KBM-7 (cell line): ENCODE measurements at regions of chr1 and their contacts with region 1.

Region 1: GRCh38 chr1:43757343-43758053 is 50.2 kb downstream of the ST3GAL3 start:
- DNase-seq: no peak

Region 2: DNA sequence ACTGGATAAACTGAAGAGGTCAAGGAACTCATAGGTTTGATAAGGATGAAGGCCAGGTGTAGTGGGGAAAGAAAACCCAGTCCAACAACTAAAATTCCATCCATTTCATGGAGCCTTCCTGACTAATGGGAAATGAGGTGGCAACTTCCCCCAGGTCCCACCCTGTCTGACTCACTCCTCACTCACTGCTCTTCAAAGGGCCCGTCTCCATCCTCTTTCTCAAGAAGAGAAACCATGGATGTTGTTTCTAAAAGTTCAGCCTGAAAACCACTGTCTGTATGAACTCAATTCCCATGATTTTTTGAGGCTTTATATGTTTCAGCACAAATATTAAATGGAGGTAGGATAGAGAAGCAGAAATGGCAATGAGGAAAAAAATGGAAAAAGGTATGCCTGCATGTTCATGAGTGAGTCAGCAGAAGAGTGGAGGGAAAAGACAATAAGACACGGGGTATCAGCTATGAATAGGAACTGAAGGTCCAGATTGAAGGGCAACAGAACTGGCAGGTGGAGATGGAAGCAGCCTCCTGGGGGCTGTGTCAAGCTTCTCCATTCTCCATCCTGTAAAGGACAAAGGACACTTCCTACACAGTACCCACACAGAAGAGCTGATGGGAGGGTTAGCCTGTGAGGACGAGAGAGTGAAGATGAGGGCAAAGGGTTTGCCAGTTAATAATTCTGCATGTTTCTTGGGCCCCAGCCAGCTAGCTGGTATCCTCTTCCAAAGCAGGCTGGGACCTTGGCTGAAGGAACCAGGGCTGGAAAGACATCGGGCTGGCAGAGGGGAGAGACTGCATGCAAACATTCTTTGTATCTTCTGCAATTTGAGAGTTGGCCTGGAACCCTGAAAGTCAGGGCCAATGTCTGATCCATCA is 384.2 kb before region 1 on chr1:
- in situ Hi-C with region 1: no loop called
- DNase-seq: no peak

Region 3: DNA sequence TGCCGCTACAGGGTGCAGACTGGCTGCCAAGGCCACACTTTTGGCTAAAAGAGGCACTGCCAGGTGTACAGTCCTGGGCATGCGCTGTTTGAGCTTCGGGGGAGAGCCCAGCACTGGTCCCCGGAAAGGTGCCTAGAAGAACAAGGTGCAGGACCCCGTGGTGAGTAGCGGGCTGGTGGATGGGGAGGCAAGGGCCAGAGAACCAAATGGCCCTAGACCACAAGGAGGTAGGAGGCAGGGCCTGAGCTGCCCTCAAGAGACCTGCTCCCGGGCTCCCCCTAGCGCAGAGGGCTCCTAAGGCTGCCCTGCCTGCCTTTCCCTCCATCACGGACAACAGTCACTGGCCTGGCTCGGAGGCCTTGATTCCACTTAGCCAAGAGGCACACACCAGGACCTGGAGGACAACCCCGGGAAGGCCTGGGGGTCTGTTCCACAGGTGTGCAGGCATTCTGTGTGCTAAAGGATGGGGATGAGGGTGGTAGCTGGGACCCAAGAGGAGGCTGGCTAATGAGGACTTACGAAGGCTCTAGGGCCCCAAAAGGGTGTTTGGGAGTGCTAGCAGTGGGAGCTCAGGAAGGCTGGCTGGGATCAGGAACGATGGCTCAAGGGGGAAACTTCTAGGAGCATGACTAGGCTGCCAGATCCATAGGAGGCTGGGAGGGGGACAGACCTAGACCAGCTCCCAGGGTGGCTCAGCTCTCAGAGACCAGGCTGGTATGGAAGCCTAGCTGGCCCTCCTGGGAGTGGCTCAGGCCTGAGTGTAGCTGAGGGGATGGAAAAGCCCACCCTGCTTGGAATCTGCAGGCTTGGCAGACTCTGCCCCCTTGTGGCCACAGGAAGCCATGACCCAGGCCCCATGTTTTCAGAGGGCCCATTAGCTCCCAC is 176.8 kb after region 1 on chr1:
- in situ Hi-C with region 1: loop called (anchors 10 kb)
- DNase-seq: peak; percentile 75